Activated CD4-positive, alpha-beta T cell treated with anti-CD3 and anti-CD28 coated beads for 36 hours (primary cell): ENCODE measurements at regions of chr9 and their contacts with region 1.

Region 1: DNA sequence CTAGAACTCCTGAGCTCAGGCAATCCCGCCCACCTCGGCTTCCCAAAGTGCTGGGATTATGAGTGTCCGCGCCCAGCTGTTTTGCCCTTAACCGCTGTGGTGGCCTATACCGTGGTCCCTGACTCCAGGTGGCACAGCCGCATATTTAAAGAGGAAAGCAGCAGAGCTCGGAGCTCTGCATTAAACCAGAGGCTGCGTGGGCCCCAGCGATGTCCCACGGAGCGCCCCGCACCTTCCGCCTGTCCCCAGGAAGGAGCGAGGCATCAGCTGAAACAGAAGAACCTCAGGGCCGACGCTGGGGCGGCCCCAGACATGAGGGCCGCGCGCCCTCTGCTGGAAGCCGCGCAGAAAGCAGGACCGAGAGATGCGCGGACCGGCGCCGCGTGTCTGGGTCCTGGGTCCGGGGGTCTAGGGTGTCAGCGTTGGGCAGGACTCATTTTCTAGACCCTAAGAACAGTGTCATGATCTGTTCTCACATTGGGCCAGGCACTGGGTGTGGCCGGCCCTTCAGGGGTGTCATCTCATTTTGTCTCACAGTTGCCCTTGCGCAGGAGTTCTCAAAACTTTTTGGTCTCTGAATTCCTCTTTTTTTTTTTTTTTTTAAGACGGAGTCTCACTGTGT is 37.7 kb downstream of the LAMC3 start:
- DNase-seq: peak; percentile 86
- ATAC-seq: peak; percentile 89
- H3K4me3 Mint-ChIP-seq: no peak overlapping the region
- H3K27ac Mint-ChIP-seq: no peak overlapping the region
- H3K4me1 Mint-ChIP-seq: peaks cover 10% of the 10 kb centered on the region
- H3K27me3 Mint-ChIP-seq: peaks cover 3% of the 10 kb centered on the region

Region 2: GRCh38 chr9:130707225-130707976 is 339.3 kb before region 1 on chr9:
- CTCF ChIA-PET with region 1: interaction called, 4 read pairs
- POLR2A ChIA-PET with region 1: no interaction called
- intact Hi-C with region 1: loop called in 1 of 2 experiments (anchors 1 kb)
- DNase-seq: peak; percentile 82
- ATAC-seq: peak; percentile 33
- H3K4me3 Mint-ChIP-seq: no peak overlapping the region
- H3K27ac Mint-ChIP-seq: no peak overlapping the region
- H3K4me1 Mint-ChIP-seq: peaks cover 5% of the 10 kb centered on the region
- H3K27me3 Mint-ChIP-seq: no peaks in the 10 kb centered on the region

Region 3: DNA sequence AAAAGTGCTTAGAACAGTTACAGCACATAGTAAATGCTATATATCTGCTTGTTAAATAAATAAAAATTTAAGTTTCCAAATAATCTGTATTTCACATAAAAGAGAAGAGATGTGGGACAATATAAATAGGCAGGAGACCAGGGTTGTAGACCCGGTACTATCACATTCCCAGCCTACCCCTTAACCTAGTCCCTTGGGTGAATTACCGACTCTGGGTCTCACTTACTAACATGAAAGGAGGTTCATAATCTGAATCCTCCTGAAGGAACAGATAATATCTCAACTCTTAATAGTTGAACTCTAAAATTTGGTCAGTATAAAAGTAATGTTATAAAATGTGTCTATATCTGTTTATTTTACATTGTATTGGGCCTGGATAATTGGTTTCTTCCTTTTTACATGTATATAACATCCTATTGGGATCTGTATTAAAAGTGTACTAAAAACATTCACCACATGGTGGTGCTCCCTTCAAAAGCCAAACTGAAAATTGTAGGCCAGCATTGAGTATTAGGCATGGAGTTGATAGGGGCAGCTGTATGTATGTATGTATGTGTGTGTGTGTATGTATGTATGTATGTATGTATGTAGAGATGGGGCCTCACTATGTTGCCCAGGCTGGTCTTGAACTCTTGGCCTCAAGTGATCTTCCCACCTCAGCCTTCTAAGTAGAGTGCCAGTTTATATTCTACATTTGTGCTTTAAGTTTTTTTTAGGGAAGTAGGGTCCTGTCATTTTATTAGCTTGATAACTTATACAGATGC is 275.8 kb before region 1 on chr9:
- CTCF ChIA-PET with region 1: interaction called, 3 read pairs
- POLR2A ChIA-PET with region 1: no interaction called
- intact Hi-C with region 1: loop called in 1 of 2 experiments (anchors 2 kb)
- DNase-seq: no peak
- ATAC-seq: peak; percentile 73
- H3K4me3 Mint-ChIP-seq: no peak overlapping the region
- H3K27ac Mint-ChIP-seq: no peak overlapping the region
- H3K4me1 Mint-ChIP-seq: peaks cover 23% of the 10 kb centered on the region
- H3K27me3 Mint-ChIP-seq: no peaks in the 10 kb centered on the region

Region 4: GRCh38 chr9:130940693-130941576 is 105.8 kb before region 1 on chr9:
- CTCF ChIA-PET with region 1: no interaction called
- POLR2A ChIA-PET with region 1: no interaction called
- intact Hi-C with region 1: loop called in 1 of 2 experiments (anchors 2 kb)
- DNase-seq: peak; percentile 88
- ATAC-seq: peak; percentile 86
- H3K4me3 Mint-ChIP-seq: no peak overlapping the region
- H3K27ac Mint-ChIP-seq: no peak overlapping the region
- H3K4me1 Mint-ChIP-seq: peaks cover 9% of the 10 kb centered on the region
- H3K27me3 Mint-ChIP-seq: peaks cover 38% of the 10 kb centered on the region

Region 5: GRCh38 chr9:131008909-131009618 is 37.6 kb before region 1 on chr9 and contains the start of gene LAMC3:
- CTCF ChIA-PET with region 1: interaction called, 7 read pairs
- POLR2A ChIA-PET with region 1: no interaction called
- intact Hi-C with region 1: loop called in 1 of 2 experiments (anchors 2 kb)
- DNase-seq: peak; percentile 39
- ATAC-seq: peak; percentile 55
- H3K4me3 Mint-ChIP-seq: peak within 1 kb of the TSS; percentile 53
- H3K27ac Mint-ChIP-seq: no peak within 1 kb of the TSS
- H3K4me1 Mint-ChIP-seq: no peaks in the 10 kb centered on the region
- H3K27me3 Mint-ChIP-seq: peaks cover 16% of the 10 kb centered on the region
- total RNA-seq, gene LAMC3: 0.40 to 0.59 TPM